CD4-positive, alpha-beta T cell (primary cell): ENCODE measurements at regions of chr2 and their contacts with region 1.

Region 1: GRCh38 chr2:190880378-190881073 is at the start of gene GLS:
- DNase-seq: peak; percentile 94 to 99 (median 95)
- ATAC-seq: peak; percentile 74
- H3K4me3 ChIP-seq: peak within 1 kb of the TSS; percentile 73
- H3K4me3 Mint-ChIP-seq: peak within 1 kb of the TSS; percentile 99
- H3K27ac ChIP-seq: peak within 1 kb of the TSS; percentile 86 to 96
- H3K27ac Mint-ChIP-seq: peak within 1 kb of the TSS; percentile 97
- H3K4me1 ChIP-seq: peaks cover 29% of the 10 kb centered on the region
- H3K4me1 Mint-ChIP-seq: peaks cover 63% of the 10 kb centered on the region
- H3K27me3 ChIP-seq: no peaks in the 10 kb centered on the region
- H3K27me3 Mint-ChIP-seq: no peaks in the 10 kb centered on the region
- CTCF ChIP-seq: no peak
- total RNA-seq, gene GLS: 215 to 224 TPM

Region 2: GRCh38 chr2:189628817-189629530 is 1251.6 kb before region 1 on chr2:
- CTCF ChIA-PET with region 1: no interaction called
- POLR2A ChIA-PET with region 1: no interaction called
- intact Hi-C with region 1: no loop called
- DNase-seq: no peak
- ATAC-seq: no peak
- H3K4me3 ChIP-seq: no peak overlapping the region
- H3K4me3 Mint-ChIP-seq: no peak overlapping the region
- H3K27ac ChIP-seq: no peak overlapping the region
- H3K27ac Mint-ChIP-seq: no peak overlapping the region
- H3K4me1 ChIP-seq: peaks cover 12% of the 10 kb centered on the region
- H3K4me1 Mint-ChIP-seq: peaks cover 21% of the 10 kb centered on the region
- H3K27me3 ChIP-seq: no peaks in the 10 kb centered on the region
- H3K27me3 Mint-ChIP-seq: no peaks in the 10 kb centered on the region
- CTCF ChIP-seq: no peak

Region 3: GRCh38 chr2:189762551-189763298 is 1117.8 kb before region 1 on chr2 and contains the start of gene OSGEPL1:
- CTCF ChIA-PET with region 1: no interaction called
- POLR2A ChIA-PET with region 1: interaction called, 11 read pairs
- intact Hi-C with region 1: no loop called
- DNase-seq: peak; percentile 84 to 96 (median 92)
- ATAC-seq: peak; percentile 92
- H3K4me3 ChIP-seq: peak within 1 kb of the TSS; percentile 78
- H3K4me3 Mint-ChIP-seq: peak within 1 kb of the TSS; percentile 100
- H3K27ac ChIP-seq: peak within 1 kb of the TSS; percentile 87 to 91
- H3K27ac Mint-ChIP-seq: peak within 1 kb of the TSS; percentile 100
- H3K4me1 ChIP-seq: peaks cover 9% of the 10 kb centered on the region
- H3K4me1 Mint-ChIP-seq: peaks cover 17% of the 10 kb centered on the region
- H3K27me3 ChIP-seq: no peaks in the 10 kb centered on the region
- H3K27me3 Mint-ChIP-seq: no peaks in the 10 kb centered on the region
- CTCF ChIP-seq: peak; percentile 73
- total RNA-seq, gene OSGEPL1: 3.3 to 3.7 TPM

Region 4: DNA sequence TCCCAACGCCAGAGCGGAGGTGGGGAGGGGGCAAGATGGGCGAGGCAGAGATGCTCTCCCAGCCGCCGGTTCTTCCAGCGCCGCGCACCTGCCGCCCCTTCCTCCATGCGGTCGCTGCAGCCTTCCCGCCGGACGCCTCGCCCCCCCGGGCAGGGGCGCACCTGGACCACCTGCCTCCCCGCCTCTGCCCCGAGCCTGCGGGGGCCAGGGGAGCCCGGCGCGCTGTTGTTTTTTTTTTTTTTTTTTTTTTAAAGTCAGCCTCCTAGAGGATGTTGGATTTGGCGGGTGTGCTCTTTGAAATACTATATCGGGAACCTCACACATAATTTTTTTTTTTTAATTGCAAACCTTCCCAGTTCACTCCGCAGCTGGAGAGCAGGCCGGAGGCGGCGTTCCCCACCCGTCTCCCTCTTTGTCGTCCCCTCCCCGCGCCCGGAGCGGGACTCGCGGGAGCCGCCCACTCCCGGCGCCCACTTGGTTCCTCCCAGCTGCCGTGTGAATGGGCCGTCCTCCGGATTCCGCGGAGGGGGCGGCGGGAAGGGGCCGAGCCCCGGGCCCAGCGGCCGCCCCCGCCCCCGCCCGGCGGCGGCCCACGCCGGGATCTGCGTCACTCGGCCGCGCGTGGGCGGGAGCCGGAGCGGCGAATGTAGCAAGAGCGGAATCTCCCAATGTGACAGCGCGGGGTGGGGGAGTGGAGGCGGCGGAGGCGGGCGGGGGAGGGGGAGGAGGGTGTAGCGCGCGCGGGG is 232.1 kb before region 1 on chr2:
- CTCF ChIA-PET with region 1: no interaction called
- POLR2A ChIA-PET with region 1: interaction called, 4 read pairs
- intact Hi-C with region 1: loop called in 1 of 2 experiments (anchors 5 kb)
- DNase-seq: peak; percentile 82 to 98 (median 89)
- ATAC-seq: peak; percentile 77
- H3K4me3 ChIP-seq: peak overlapping the region; percentile 71
- H3K4me3 Mint-ChIP-seq: peak overlapping the region; percentile 92
- H3K27ac ChIP-seq: peak overlapping the region; percentile 83
- H3K27ac Mint-ChIP-seq: peak overlapping the region; percentile 93
- H3K4me1 ChIP-seq: peaks cover 20% of the 10 kb centered on the region
- H3K4me1 Mint-ChIP-seq: peaks cover 57% of the 10 kb centered on the region
- H3K27me3 ChIP-seq: no peaks in the 10 kb centered on the region
- H3K27me3 Mint-ChIP-seq: no peaks in the 10 kb centered on the region
- CTCF ChIP-seq: no peak

Region 5: GRCh38 chr2:190896477-190896876 is 16.0 kb after region 1 on chr2:
- CTCF ChIA-PET with region 1: no interaction called
- POLR2A ChIA-PET with region 1: interaction called, 86 read pairs
- intact Hi-C with region 1: loop called in 1 of 2 experiments (anchors 2 kb)
- DNase-seq: no peak
- ATAC-seq: no peak
- H3K4me3 ChIP-seq: no peak overlapping the region
- H3K4me3 Mint-ChIP-seq: no peak overlapping the region
- H3K27ac ChIP-seq: no peak overlapping the region
- H3K27ac Mint-ChIP-seq: peak overlapping the region; percentile 10
- H3K4me1 ChIP-seq: peaks cover 4% of the 10 kb centered on the region
- H3K4me1 Mint-ChIP-seq: peaks cover 27% of the 10 kb centered on the region
- H3K27me3 ChIP-seq: no peaks in the 10 kb centered on the region
- H3K27me3 Mint-ChIP-seq: no peaks in the 10 kb centered on the region
- CTCF ChIP-seq: no peak

Region 6: DNA sequence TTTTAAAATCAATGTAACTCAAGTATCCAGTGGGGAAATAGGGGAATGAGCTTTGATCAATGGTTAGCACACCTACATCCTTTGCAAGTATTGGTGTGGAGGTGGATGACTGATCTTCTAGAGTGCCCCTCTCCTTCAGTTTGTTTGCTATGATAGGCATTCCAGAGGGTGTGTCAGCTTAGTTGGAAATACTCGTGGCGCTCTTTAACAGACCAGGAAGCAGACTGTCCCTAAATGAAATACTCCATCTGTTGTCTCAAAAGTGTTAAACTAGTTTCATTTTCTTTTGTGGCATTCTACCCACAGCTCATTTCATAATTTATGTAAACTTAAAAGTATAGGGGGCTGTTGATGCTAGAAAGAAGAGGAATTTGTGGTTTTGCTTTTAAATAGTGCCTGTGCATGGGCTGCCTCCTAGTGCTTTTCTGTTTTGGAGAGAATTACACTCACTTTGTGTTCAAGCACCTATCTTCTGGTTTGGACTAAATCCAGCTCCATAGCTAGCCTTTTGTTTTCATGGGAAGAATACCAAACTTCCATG is 67.3 kb after region 1 on chr2:
- CTCF ChIA-PET with region 1: interaction called, 5 read pairs
- POLR2A ChIA-PET with region 1: interaction called, 57 read pairs
- intact Hi-C with region 1: loop called in 1 of 2 experiments (anchors 2 kb)
- DNase-seq: peak in 4 of 14 experiments; percentile 14 to 66 (median 64)
- ATAC-seq: peak; percentile 85
- H3K4me3 ChIP-seq: no peak overlapping the region
- H3K4me3 Mint-ChIP-seq: peak overlapping the region; percentile 59
- H3K27ac ChIP-seq: peak overlapping the region; percentile 16 to 66
- H3K27ac Mint-ChIP-seq: no peak overlapping the region
- H3K4me1 ChIP-seq: peaks cover 12% of the 10 kb centered on the region
- H3K4me1 Mint-ChIP-seq: peaks cover 27% of the 10 kb centered on the region
- H3K27me3 ChIP-seq: no peaks in the 10 kb centered on the region
- H3K27me3 Mint-ChIP-seq: no peaks in the 10 kb centered on the region
- CTCF ChIP-seq: no peak

Region 7: GRCh38 chr2:191020221-191020741 is 139.8 kb after region 1 on chr2:
- CTCF ChIA-PET with region 1: no interaction called
- POLR2A ChIA-PET with region 1: interaction called, 20 read pairs
- intact Hi-C with region 1: loop called in 1 of 2 experiments (anchors 5 kb)
- DNase-seq: peak; percentile 84 to 98 (median 92)
- ATAC-seq: peak; percentile 73
- H3K4me3 ChIP-seq: peak overlapping the region; percentile 82
- H3K4me3 Mint-ChIP-seq: no peak overlapping the region
- H3K27ac ChIP-seq: peak overlapping the region; percentile 84 to 87
- H3K27ac Mint-ChIP-seq: no peak overlapping the region
- H3K4me1 ChIP-seq: peaks cover 54% of the 10 kb centered on the region
- H3K4me1 Mint-ChIP-seq: peaks cover 32% of the 10 kb centered on the region
- H3K27me3 ChIP-seq: no peaks in the 10 kb centered on the region
- H3K27me3 Mint-ChIP-seq: no peaks in the 10 kb centered on the region
- CTCF ChIP-seq: no peak